Right cardiac atrium (tissue), 5 donors: ENCODE measurements at regions of chr1 and their contacts with region 1.

Region 1: DNA sequence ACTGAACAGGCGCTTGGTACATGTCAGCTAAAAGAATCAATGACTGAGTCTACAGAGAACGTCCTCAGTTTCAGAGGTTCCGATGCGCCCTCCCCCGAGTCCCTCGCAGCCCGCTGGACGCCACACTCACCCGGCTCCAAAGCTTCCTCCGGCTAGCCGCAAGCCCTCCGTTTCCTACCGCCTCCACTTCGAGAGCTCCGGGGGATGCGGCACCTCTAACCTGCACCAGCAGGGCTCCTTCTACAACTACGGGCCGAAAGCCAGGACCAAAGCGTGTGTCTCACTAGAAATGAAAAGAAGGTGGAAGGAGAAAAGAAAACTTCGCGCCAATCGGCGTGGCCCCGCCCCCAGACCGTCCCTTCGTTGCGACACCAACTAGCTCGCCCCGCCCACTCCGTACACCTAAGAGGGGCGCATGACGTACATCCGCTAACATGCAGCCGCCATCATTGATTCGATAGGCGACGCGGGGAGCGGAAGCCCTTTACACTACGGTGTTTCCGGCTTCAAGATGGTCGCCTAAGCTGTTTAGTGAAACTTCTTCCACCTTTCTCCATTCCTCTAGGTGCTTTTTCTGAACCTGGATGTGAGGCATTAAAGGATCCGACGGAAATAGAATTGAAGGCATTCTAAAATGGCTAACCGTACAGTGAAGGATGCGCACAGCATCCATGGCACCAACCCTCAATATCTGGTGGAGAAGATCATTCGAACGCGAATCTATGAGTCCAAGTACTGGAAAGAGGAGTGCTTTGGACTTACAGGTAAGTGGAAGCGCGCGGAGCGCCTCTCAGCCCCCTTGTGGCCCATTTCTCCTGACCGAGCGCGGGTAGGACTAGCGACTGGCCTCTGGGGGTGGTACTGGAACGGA is at the starts of genes ORC1 and PRPF38A:
- DNase-seq: peak; percentile 97 to 99 (median 98)
- ATAC-seq: peak; percentile 100
- H3K4me3 ChIP-seq: peak within 1 kb of the TSS; percentile 91
- H3K27ac ChIP-seq: peak within 1 kb of the TSS; percentile 84
- H3K4me1 ChIP-seq: no peaks in the 10 kb centered on the region
- H3K27me3 ChIP-seq: no peaks in the 10 kb centered on the region
- total RNA-seq, gene ORC1: 0.08 to 0.47 (median 0.23) TPM
- total RNA-seq, gene PRPF38A: 18.0 to 26.3 (median 23.6) TPM

Region 2: GRCh38 chr1:52348704-52349300 is 55.5 kb before region 1 on chr1:
- intact Hi-C with region 1: no loop called
- DNase-seq: no peak
- ATAC-seq: peak; percentile 38 to 50
- H3K4me3 ChIP-seq: no peak overlapping the region
- H3K27ac ChIP-seq: no peak overlapping the region
- H3K4me1 ChIP-seq: no peaks in the 10 kb centered on the region
- H3K27me3 ChIP-seq: no peaks in the 10 kb centered on the region

Region 3: GRCh38 chr1:52697795-52698674 is 293.7 kb after region 1 on chr1 and contains the start of gene COA7:
- intact Hi-C with region 1: loop called in 1 of 4 experiments (anchors 10 kb)
- DNase-seq: peak; percentile 89 to 96 (median 96)
- ATAC-seq: peak; percentile 93 to 94
- H3K4me3 ChIP-seq: peak within 1 kb of the TSS; percentile 43
- H3K27ac ChIP-seq: peak within 1 kb of the TSS; percentile 77
- H3K4me1 ChIP-seq: no peaks in the 10 kb centered on the region
- H3K27me3 ChIP-seq: no peaks in the 10 kb centered on the region
- total RNA-seq, gene COA7: 14.9 to 16.4 (median 15.5) TPM